PC-3 (cell line): ENCODE measurements at regions of chr4 and their contacts with region 1.

Region 1: DNA sequence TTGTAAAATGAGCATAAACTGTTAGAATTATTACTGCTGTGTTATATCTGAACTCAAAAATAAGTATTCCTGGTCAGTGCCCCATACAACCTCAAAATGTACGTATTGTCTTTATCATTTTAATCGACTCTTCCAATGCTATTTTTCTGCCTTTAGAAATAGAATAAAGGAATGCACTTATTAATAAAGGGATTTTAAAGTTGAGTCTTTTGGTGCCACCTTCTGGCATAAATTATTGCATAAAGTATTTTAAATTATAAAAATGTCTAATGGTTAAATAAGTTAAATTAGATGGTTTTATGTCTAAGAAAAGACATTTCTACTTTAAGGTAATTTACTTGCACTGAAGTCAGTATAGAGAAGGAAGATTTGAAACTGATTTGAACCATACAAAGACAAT is 424.0 kb upstream of the NDST4 start:
- DNase-seq: peak; percentile 27
- ATAC-seq: no peak
- H3K4me3 ChIP-seq: no peak overlapping the region
- H3K27ac ChIP-seq: no peak overlapping the region
- H3K4me1 ChIP-seq: no peaks in the 10 kb centered on the region
- H3K27me3 ChIP-seq: no peaks in the 10 kb centered on the region
- CTCF ChIP-seq: peak; percentile 42; the same call in 1 of the 2 replicates

Region 2: DNA sequence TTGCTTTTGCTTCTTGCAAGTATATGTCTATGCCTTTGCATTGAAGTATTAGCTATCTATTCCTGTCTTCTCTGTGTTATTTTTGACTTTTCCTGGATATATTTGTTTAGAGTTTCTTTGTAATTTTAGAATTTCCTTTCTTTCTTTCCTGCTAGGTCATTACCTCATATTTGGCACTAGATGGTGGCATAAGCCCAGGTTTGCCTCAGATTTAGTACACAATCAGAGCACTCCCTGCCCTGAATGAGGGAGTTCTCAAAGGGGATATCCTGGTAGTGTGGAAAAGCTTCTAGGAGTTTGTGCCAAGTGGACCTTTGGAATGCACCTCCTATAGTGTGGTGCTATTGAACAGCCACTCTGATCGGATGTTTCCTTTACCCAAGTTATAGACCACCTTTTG is 757.2 kb before region 1 on chr4:
- CTCF ChIA-PET with region 1: no interaction called
- POLR2A ChIA-PET with region 1: no interaction called
- intact Hi-C with region 1: loop called (anchors 1 kb)
- DNase-seq: peak; percentile 36
- ATAC-seq: peak; percentile 64; the same call in 1 of the 2 replicates
- H3K4me3 ChIP-seq: no peak overlapping the region
- H3K27ac ChIP-seq: no peak overlapping the region
- H3K4me1 ChIP-seq: no peaks in the 10 kb centered on the region
- H3K27me3 ChIP-seq: no peaks in the 10 kb centered on the region
- CTCF ChIP-seq: peak; percentile 59

Region 3: DNA sequence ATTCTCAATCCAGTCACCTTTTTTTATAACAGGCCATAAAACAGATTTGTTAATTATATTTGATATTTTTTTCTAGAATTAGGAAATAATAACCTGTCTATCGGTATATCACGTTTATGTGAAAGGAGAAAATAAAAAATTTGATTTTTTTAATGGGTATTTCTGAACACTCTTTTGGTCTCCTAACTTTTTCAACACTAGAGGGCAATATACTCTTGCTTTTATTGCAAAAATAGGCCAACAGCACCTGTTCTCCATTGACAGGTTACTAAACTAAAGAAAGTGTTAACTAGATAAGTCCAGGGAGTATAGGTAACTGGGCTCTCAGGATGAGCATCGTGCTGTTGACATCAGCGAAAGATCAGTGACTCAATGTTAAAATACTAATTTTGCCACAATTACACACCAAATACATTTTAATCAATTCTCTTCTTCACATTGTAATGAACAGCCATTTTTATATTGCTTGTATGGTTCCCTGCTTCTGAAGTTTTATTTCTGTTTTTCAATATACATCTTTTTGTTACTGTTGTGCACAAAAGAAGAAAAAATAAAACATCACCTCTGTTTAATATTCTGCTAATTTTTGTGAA is 446.8 kb before region 1 on chr4:
- CTCF ChIA-PET with region 1: no interaction called
- POLR2A ChIA-PET with region 1: no interaction called
- intact Hi-C with region 1: loop called (anchors 1 kb)
- DNase-seq: peak; percentile 58
- ATAC-seq: no peak
- H3K4me3 ChIP-seq: no peak overlapping the region
- H3K27ac ChIP-seq: no peak overlapping the region
- H3K4me1 ChIP-seq: no peaks in the 10 kb centered on the region
- H3K27me3 ChIP-seq: no peaks in the 10 kb centered on the region
- CTCF ChIP-seq: peak; percentile 67

Region 4: DNA sequence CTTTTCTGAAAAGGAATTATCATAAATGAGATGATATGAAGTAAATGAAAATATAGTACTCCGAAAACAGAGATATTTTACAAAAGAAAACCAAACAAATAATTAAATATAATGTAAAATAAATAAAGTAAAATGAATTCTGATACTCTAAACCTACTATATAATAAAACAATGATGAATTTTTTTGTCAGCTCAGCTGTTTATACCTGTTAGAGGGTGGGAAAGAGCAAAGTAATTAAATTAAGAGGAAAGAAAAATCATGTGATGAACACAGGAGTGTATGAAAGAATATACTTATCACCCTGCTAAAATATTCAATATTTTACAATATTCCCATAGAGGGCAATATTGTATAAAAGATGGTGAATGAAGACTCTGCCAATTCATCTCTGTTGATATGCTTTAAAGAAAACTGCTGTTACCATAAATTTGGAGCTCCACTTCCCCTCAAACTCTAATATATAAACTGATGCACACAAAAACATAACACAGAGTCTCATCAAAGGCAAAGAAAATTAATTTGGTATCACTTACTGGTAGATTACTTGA is 417.5 kb before region 1 on chr4:
- CTCF ChIA-PET with region 1: no interaction called
- POLR2A ChIA-PET with region 1: no interaction called
- intact Hi-C with region 1: loop called (anchors 2 kb)
- DNase-seq: no peak
- ATAC-seq: no peak
- H3K4me3 ChIP-seq: no peak overlapping the region
- H3K27ac ChIP-seq: no peak overlapping the region
- H3K4me1 ChIP-seq: no peaks in the 10 kb centered on the region
- H3K27me3 ChIP-seq: no peaks in the 10 kb centered on the region
- CTCF ChIP-seq: 0 out of 2 replicates have a peak, but pooled peaks have one; percentile 17

Region 5: GRCh38 chr4:115234405-115235093 is 302.8 kb before region 1 on chr4:
- CTCF ChIA-PET with region 1: interaction called, 11 read pairs
- POLR2A ChIA-PET with region 1: no interaction called
- intact Hi-C with region 1: loop called (anchors 1 kb)
- DNase-seq: peak; percentile 42
- ATAC-seq: peak; percentile 56
- H3K4me3 ChIP-seq: no peak overlapping the region
- H3K27ac ChIP-seq: no peak overlapping the region
- H3K4me1 ChIP-seq: no peaks in the 10 kb centered on the region
- H3K27me3 ChIP-seq: no peaks in the 10 kb centered on the region
- CTCF ChIP-seq: peak; percentile 49

Region 6: DNA sequence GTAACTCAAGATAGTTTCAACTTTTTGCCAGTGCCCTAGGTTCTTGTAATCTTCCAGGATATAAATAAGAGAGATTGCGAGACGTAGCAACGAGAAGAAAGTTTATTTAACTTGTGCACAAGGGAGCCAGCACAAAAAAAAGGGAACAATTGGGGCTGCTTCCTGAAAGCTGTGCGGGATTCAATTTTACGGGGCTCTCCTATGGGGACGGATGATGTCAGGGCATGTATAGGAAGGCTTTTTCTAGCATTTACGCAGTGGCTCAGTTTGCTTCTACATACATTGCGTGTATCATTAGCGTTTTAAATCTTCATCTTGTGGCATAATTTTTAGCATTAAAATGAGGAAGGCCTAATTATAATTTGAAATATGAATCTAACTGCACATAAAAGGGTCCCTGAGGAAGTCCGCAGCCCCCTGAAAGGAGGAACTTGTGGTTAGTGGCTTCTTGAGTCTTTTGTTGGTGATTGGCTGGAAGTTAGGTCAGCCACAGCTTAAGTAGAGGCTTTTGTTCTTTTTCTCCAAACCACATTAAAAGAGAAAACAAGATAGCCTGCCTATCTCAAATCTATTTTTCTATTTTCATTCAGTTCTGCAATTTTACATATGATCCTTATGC is 244.2 kb after region 1 on chr4:
- CTCF ChIA-PET with region 1: no interaction called
- POLR2A ChIA-PET with region 1: no interaction called
- intact Hi-C with region 1: loop called (anchors 10 kb)
- DNase-seq: no peak
- ATAC-seq: no peak
- H3K4me3 ChIP-seq: no peak overlapping the region
- H3K27ac ChIP-seq: no peak overlapping the region
- H3K4me1 ChIP-seq: no peaks in the 10 kb centered on the region
- H3K27me3 ChIP-seq: no peaks in the 10 kb centered on the region
- CTCF ChIP-seq: no peak